HEK293T (cell line): ENCODE measurements at regions of chr10 and their contacts with region 1.

Region 1: DNA sequence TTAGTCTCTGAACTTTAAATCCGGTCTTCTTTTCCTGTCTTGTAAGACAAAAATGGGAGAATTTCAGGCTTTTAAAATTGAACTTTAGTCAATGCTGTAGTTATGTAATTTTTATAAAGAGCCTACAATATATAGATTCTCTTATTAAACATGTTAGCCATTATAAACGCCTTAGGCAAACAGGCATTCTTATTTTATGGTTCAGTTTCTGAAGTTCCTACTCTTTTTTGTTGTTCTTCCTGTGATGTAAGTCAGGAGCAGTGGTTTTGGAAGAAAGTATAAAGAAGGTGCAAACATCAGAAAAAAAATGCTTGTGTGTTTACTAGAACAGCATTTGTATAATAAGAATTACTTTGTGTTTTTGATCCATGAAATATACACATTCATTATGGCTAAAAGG is 41.6 kb downstream of the BICC1 start:
- DNase-seq: no peak

Region 2: DNA sequence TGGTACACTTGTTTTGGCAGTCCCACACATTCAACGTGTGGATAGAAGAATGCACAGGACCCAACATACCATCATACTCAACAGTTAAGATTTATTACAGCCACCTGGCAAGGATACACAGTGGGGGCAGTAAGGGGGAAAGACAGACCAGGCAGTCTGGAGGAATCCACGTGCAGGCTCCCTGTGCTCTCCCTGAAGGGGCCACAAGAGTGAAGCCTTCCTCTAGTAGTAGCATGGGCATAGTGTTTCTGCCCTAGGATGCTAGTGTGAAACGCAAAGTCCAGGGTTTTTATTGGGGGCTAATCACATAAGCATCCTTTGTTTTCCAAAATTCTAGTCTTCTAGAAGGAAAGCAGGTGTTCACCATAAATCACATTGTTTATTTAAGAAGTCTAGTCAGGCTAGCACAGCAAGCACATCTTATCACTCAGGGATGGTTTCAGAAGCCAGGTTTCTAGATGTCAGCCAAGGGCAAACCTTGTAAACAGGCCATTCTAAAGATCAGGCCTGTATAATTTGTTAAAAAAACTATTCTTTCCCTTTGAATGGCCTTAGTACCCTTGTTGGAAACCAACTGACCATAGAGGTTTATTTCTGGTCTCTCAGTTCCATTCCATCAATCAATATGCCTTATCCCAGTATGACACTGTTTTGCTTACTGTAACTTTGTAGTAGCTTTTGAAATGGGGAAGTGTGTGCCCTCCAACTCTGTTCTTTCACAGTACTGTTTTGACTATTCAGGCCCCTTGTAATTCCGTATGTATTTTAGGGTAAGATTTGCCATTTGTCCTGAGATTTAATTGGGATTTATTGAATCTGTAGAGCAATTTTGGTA is 181.5 kb before region 1 on chr10:
- CTCF ChIA-PET with region 1: no interaction called
- POLR2A ChIA-PET with region 1: no interaction called
- DNase-seq: no peak

Region 3: DNA sequence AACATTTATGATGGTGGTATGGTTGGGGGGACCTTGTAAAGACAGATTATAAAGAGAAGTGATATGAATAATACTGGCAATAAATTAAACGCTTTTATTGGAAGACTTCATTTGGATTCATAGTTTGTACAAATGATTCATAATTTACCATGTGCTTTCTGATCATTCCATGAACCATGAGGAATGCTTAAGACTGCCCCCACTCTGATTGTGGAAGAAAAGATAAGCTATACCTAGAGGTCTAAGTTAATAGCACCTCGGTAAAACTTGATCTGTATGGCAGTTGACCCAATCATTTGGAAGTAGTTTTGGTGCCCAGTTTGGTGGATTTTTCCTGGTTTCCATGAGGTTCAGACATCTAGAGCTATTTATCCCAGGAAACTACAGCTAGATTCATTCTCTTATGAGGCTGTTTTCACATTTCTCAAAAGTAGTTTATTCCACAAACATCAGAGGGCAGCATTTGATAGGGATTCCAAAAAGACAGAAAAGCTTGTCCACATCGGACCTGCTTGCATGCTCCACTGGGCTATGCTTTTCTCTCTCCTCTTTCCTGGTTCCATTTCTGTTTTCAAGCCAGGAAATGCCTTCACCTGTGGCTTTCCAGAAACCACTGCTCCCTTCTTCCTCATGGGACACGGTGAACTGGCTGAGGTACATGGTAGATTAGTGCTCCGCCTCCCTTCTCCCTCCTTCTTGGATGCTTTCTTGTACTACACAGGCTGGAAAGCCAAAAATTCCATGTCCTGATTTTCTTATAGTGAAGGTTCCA is 139.9 kb before region 1 on chr10:
- CTCF ChIA-PET with region 1: interaction called, 10 read pairs
- POLR2A ChIA-PET with region 1: no interaction called
- DNase-seq: peak; percentile 38

Region 4: DNA sequence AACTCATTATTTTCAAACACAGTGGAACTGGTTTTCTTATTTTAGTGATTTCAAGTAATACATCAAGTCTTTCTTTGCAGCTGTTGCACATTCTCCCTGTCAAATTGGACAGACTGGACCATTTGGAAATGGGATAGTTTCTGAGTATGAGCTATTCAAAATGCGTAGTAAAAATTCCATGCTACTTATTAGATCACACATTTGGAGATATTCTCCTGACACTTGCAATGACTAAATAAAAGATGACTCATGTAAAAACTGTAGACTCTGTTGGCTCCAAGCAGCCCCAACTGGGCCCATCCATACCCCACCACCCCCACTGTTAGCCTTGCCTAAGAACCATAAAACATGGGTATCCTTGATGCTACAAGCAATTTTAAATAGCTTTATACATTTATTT is 67.5 kb before region 1 on chr10:
- CTCF ChIA-PET with region 1: no interaction called
- POLR2A ChIA-PET with region 1: no interaction called
- DNase-seq: no peak

Region 5: GRCh38 chr10:58775960-58776567 is 221.7 kb after region 1 on chr10:
- CTCF ChIA-PET with region 1: no interaction called
- POLR2A ChIA-PET with region 1: no interaction called
- DNase-seq: no peak